ENCODE measurements at regions of chr12 and their contacts with region 1.

Region 1: GRCh38 chr12:57621497-57622292 is 10.5 kb downstream of the ARHGEF25 start:
- DNase-seq: peak; percentile 76
- ATAC-seq: peak; percentile 83

Region 2: GRCh38 chr12:57352166-57352565 is 269.5 kb before region 1 on chr12:
- intact Hi-C with region 1: no loop called
- DNase-seq: no peak
- ATAC-seq: no peak

Region 3: GRCh38 chr12:57583008-57583831 is 38.5 kb before region 1 on chr12:
- intact Hi-C with region 1: loop called (anchors 2 kb)
- DNase-seq: peak; percentile 48
- ATAC-seq: peak; percentile 95 to 96

Measured in left cardiac atrium (tissue), 4 donors.